Mucosa of descending colon (tissue), 3 donors: ENCODE measurements at regions of chr11 and their contacts with region 1.

Region 1: GRCh38 chr11:64688534-64688982 is 34.4 kb downstream of the NRXN2 start:
- DNase-seq: peak; percentile 84 to 91 (median 87)
- ATAC-seq: peak; percentile 94
- H3K4me3 ChIP-seq: no peak overlapping the region
- H3K4me1 ChIP-seq: no peaks in the 10 kb centered on the region
- CTCF ChIP-seq: peak; percentile 67

Region 2: GRCh38 chr11:64729851-64730382 is 41.4 kb after region 1 on chr11:
- intact Hi-C with region 1: loop called in 1 of 2 experiments (anchors 5 kb)
- DNase-seq: peak in 2 of 3 donors; percentile 71
- ATAC-seq: peak; percentile 74
- H3K4me3 ChIP-seq: no peak overlapping the region
- H3K4me1 ChIP-seq: no peaks in the 10 kb centered on the region
- CTCF ChIP-seq: no peak